ENCODE measurements at regions of chr18 and their contacts with region 1.

Region 1: DNA sequence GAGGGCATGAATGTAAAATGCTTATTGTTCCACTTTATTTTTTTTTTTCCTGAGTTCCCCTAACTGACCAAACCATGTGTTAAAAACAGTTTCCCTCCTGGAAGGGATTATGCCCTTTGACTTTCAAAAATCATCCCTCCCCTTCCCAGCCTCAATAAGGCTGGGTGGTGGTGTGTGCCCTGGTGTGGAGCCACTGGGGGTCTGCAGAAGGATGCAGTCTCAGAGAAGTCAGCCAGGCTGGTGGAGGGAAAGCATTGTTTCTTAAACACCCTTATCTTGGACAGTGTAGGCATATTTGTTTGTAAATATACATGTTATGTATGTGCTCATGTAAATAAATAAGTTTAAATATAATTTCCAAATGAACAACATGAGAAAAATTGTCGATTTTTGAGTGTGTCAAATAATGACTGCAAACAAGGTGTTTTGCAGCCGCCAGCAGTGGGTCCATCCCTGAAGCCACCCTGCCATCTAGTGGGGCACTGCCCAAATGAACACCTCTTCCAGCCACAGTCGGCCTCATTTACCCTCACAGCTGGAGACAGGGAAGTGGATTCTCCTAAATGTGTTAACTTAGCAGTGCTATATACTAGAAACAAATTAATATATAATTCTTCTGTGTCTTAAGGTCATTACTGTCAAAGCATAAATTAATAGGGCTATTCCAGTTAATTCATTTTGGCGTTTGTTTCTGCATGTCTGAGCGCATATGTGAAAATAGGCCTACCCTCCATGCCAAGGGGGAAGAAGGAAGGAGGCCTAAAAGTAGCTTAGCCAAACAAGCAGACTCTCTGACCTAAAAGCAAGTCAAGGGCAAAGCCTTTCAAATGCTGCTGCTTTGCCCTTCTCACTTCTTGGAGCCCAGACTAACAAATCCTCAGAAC is 209.6 kb upstream of the PIK3C3 start:
- DNase-seq: peak; percentile 64
- H3K4me3 Mint-ChIP-seq: no peak overlapping the region
- H3K27ac Mint-ChIP-seq: peak overlapping the region; percentile 21
- H3K4me1 Mint-ChIP-seq: no peaks in the 10 kb centered on the region
- H3K27me3 Mint-ChIP-seq: peaks cover 11% of the 10 kb centered on the region
- CTCF ChIP-seq: peak; percentile 70

Region 2: GRCh38 chr18:40413160-40413559 is 1332.2 kb before region 1 on chr18:
- CTCF ChIA-PET with region 1: interaction called, 4 read pairs
- POLR2A ChIA-PET with region 1: no interaction called
- intact Hi-C with region 1: loop called (anchors 10 kb)
- DNase-seq: peak; percentile 52
- H3K4me3 Mint-ChIP-seq: no peak overlapping the region
- H3K27ac Mint-ChIP-seq: no peak overlapping the region
- H3K4me1 Mint-ChIP-seq: peaks cover 12% of the 10 kb centered on the region
- H3K27me3 Mint-ChIP-seq: no peaks in the 10 kb centered on the region
- CTCF ChIP-seq: peak; percentile 53

Region 3: DNA sequence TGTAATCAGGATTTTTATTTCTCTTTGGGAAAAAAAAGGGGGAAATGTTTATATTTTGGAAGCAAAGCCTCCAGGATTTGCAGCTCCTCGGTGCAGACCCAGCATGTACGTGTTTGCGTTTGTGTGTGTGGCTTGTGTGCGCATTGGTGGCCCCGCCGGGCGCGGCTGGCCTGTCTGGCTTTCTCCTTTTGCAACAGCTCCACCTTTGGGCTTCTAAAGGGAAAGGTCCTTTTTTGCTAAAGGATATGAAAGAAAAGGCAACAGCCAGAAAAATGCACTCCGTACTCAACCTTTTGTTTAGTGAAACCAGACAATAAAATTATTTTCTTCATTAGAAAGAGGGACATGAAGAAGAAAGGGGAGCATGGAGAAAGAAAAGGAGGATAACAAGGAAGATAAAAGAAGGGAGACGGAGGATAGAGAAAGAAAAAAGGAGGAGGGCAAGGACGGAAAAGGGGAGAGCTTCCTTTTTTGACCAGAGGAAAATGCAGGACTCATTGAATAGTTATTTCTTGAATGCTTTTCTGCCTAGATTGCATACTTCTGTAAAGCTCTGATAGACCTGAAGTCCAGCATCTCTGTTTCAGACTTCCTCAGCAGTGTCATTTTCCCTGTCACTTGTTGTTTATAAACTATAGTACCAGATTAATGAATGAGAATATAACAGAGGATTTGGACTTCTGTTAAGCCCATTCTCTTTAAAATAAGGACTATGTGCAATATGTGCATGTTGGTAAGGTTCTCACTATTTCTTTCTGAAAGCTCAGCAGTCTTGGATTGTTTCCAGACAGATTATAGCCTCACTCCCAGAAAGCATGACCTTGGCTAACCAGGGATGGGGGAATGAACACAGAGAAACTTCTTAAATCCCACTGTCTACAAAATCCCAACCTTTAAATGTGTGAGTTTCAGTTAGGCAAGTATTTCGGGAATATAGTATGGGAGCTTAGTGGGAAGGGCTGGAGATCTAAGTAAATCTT is 353.5 kb before region 1 on chr18:
- CTCF ChIA-PET with region 1: interaction called, 5 read pairs
- POLR2A ChIA-PET with region 1: no interaction called
- intact Hi-C with region 1: loop called (anchors 5 kb)
- DNase-seq: peak; percentile 73
- H3K4me3 Mint-ChIP-seq: peak overlapping the region; percentile 72
- H3K27ac Mint-ChIP-seq: peak overlapping the region; percentile 85
- H3K4me1 Mint-ChIP-seq: peaks cover 6% of the 10 kb centered on the region
- H3K27me3 Mint-ChIP-seq: no peaks in the 10 kb centered on the region
- CTCF ChIP-seq: peak; percentile 75

Region 4: DNA sequence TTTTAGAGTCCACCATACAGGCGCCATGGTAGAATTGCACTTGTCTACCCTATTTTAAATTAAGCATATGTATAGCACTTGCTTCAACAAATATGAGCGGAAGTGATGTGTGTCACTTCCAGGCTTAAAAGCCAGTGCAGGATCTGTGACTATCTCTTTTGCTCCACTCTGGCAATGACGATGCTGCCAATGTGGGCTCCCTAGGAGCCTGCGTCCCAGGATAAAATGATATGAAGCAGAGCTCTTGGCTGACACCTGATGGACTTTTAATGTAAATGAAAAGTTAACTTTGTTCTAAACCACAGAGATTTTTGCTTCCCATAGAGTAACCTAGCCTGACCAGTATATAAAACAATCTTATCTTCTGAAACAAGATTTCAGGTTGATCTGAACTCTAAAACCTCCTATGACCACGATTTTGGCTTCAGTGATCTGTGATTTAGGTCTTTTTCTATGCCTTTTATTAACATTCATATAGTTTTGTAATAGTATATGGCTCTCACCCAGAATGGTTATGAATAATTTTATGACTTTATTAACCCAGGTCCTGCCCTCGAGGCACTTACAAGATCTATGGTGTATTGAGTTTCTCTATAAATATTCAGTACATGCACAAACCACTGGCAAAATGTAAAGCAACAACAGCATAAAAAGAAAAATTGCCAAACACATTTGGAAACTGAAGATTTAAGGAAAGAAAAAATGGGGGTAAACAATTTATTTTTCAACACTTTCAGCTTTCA is 212.9 kb before region 1 on chr18:
- CTCF ChIA-PET with region 1: interaction called, 3 read pairs
- POLR2A ChIA-PET with region 1: no interaction called
- intact Hi-C with region 1: loop called (anchors 1 kb)
- DNase-seq: peak; percentile 42
- H3K4me3 Mint-ChIP-seq: no peak overlapping the region
- H3K27ac Mint-ChIP-seq: no peak overlapping the region
- H3K4me1 Mint-ChIP-seq: no peaks in the 10 kb centered on the region
- H3K27me3 Mint-ChIP-seq: peaks cover 51% of the 10 kb centered on the region
- CTCF ChIP-seq: peak; percentile 26

Measured in MCF 10A (cell line).